Lower leg skin (tissue), 4 donors: ENCODE measurements at regions of chr4 and their contacts with region 1.

Region 1: GRCh38 chr4:85860066-85860740 is 385.3 kb downstream of the ARHGAP24 start:
- DNase-seq: no peak
- H3K4me3 ChIP-seq: no peak overlapping the region
- CTCF ChIP-seq: no peak
- POLR2A ChIP-seq: no peak

Region 2: DNA sequence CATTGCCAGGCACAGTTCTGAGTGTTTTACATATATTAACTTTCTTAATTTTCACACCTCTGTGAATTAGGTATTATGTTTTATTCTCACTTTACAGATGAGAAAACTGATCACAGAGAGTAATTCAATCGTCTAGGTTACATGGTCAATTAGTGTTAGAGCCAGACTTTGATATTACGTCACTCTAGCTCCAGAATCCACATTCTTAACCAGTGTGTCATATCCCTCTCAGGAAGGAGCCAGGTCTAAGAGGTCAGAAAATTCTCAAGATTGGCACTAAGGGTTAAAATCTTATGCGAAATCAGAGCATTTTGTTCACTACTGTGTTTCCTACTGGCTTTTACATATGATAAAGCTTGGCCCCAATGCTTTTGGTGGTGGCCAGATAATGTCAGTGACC is 1797.3 kb after region 1 on chr4:
- intact Hi-C with region 1: loop called (anchors 5 kb)
- DNase-seq: no peak
- H3K4me3 ChIP-seq: no peak overlapping the region
- CTCF ChIP-seq: no peak
- POLR2A ChIP-seq: no peak